ENCODE measurements at regions of chr10 and their contacts with region 1.

Region 1: DNA sequence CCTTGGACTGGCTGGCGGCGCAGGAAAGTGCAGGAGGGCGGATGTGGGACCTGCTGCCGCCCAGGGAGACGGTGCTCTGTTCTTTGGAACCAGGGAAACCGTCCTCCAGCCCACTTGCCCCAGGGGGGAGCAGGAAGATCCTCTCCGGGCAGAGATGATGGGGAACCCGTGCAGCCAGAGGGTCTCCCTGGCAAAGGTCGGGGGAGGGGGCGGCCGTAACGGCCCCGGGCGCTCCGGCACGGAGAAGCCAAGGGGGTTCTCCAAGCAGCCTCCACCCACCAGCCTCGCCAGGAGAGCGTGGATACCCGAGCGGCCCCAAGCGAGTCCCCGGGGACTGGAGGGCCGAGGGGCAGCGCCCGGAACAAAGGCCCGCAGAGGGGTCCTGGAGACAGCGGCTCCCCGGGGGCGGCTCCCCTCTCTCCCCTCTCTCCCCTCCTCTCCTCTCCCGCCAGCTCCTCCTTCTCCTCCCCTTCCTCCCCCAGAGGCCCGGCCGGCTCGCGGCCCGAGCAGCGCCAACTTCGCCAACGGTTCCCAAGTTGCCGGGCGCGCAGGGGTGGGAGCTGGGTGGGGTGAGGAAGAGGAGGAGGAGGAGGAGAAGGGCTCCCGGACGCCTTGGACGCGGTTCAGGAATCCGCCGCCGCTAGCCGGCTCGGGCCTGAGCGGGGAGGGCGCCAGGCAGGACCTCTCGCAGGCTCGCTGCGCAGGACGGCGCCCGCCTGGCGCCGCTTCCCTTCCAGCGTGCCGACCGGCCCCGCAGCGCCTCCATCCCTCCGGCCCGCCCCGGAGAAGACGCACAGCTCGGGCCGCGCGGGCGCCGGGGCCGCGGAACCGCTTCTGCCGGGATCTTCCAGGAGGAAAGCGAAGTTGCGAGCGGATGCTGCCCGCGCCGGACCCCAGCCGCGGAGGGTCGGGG is at the start of gene CHST3:
- DNase-seq: no peak
- H3K4me3 ChIP-seq: peak within 1 kb of the TSS; percentile 68 to 94 (median 78)
- H3K27ac ChIP-seq: peak within 1 kb of the TSS; percentile 94 to 100 (median 98)
- H3K4me1 ChIP-seq: peaks cover 42 to 62% (median 57%) of the 10 kb centered on the region in 4 donors
- H3K27me3 ChIP-seq: no peaks in the 10 kb centered on the region
- CTCF ChIP-seq: no peak
- EP300 ChIP-seq: no peak
- POLR2A ChIP-seq: no peak
- total RNA-seq, gene CHST3: 24.1 to 43.0 (median 38.7) TPM

Region 2: GRCh38 chr10:71873582-71874211 is 90.3 kb before region 1 on chr10:
- intact Hi-C with region 1: no loop called
- DNase-seq: no peak
- H3K4me3 ChIP-seq: no peak overlapping the region
- H3K27ac ChIP-seq: no peak overlapping the region
- H3K4me1 ChIP-seq: peaks cover 8 to 13% (median 10%) of the 10 kb centered on the region in 4 donors
- H3K27me3 ChIP-seq: no peaks in the 10 kb centered on the region
- CTCF ChIP-seq: no peak
- EP300 ChIP-seq: no peak
- POLR2A ChIP-seq: no peak

Region 3: DNA sequence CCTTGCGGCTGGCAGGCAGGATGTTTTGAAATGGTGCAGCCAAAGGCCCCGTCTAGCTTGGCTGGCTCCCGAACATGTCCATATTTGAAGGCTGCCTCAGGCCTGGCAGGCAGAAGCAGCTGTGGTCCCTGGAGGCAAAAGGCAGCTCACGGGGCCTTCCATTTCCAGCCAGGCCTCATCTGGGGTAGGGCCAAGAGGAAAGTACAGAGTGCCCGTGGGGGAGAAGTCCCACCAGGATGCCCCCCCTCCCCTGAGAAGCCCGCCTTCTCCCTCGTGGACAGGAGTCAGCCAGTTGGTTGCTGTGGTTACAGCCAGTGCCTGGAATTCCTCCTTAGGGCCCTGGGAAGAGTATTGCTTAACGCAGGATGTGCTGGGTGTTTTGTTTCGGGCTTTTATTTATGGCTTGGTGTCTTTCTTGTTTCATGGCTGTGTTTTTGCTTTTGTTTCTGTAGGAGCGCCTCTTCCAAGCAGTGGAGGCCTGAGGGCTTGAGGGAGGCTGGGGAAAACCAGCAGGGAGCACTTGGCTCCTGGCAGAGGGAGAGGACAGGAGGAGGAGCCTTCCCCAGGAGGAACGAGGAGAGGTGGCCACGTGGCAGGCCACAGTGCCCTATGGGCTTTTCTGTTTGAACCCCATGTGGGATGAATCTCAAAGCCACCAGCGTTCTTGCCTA is 45.5 kb after region 1 on chr10:
- intact Hi-C with region 1: loop called (anchors 2 kb)
- DNase-seq: peak; percentile 96
- H3K4me3 ChIP-seq: peak overlapping the region; percentile 3 to 22 (median 12)
- H3K27ac ChIP-seq: peak overlapping the region; percentile 90 to 94 (median 92)
- H3K4me1 ChIP-seq: peaks cover 65 to 77% (median 74%) of the 10 kb centered on the region in 4 donors
- H3K27me3 ChIP-seq: no peaks in the 10 kb centered on the region
- CTCF ChIP-seq: no peak
- EP300 ChIP-seq: peak; percentile 45
- POLR2A ChIP-seq: no peak

Region 4: DNA sequence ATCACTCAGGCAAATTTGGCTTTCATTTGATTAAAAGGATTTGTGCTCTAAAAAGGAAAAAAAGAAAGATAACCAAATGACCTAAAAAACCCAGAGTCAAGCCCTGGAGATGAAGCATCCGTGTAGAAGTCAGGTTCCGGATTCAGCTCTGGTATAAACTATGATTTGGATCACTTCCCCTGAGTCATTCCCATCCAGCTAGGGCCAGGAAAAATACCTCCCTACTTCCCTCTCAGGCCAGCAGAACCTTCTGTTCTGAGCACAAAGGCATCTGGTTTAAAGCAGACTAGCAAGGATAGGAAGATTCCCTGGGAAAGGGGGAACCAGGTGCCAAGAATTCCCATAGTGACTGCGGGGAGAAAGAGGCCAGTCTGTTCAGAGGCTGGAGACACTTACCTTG is 1873.1 kb after region 1 on chr10:
- intact Hi-C with region 1: no loop called
- DNase-seq: no peak
- H3K4me3 ChIP-seq: no peak overlapping the region
- H3K27ac ChIP-seq: peak overlapping the region; percentile 64 to 72 (median 68)
- H3K4me1 ChIP-seq: peaks cover 0 to 18% (median 13%) of the 10 kb centered on the region in 4 donors
- H3K27me3 ChIP-seq: no peaks in the 10 kb centered on the region
- CTCF ChIP-seq: no peak
- EP300 ChIP-seq: no peak
- POLR2A ChIP-seq: no peak